PC-3 (cell line): ENCODE measurements at regions of chr3 and their contacts with region 1.

Region 1: GRCh38 chr3:107938143-107938542 is 152.7 kb downstream of the CD47 start:
- DNase-seq: peak; percentile 79
- ATAC-seq: peak; percentile 21
- H3K4me3 ChIP-seq: no peak overlapping the region
- H3K27ac ChIP-seq: no peak overlapping the region
- H3K4me1 ChIP-seq: peaks cover 21% of the 10 kb centered on the region
- H3K27me3 ChIP-seq: no peaks in the 10 kb centered on the region
- CTCF ChIP-seq: peak; percentile 90

Region 2: GRCh38 chr3:107987036-107987947 is 49.1 kb after region 1 on chr3:
- CTCF ChIA-PET with region 1: no interaction called
- POLR2A ChIA-PET with region 1: no interaction called
- intact Hi-C with region 1: loop called (anchors 2 kb)
- DNase-seq: peak; percentile 98
- ATAC-seq: peak; percentile 52
- H3K4me3 ChIP-seq: no peak overlapping the region
- H3K27ac ChIP-seq: peak overlapping the region; percentile 94
- H3K4me1 ChIP-seq: peaks cover 58% of the 10 kb centered on the region
- H3K27me3 ChIP-seq: no peaks in the 10 kb centered on the region
- CTCF ChIP-seq: no peak

Region 3: GRCh38 chr3:108090701-108091451 is 152.7 kb after region 1 on chr3 and contains the start of gene CD47:
- CTCF ChIA-PET with region 1: no interaction called
- POLR2A ChIA-PET with region 1: no interaction called
- intact Hi-C with region 1: loop called (anchors 1 kb)
- DNase-seq: peak; percentile 92
- ATAC-seq: peak; percentile 79
- H3K4me3 ChIP-seq: peak within 1 kb of the TSS; percentile 96
- H3K27ac ChIP-seq: peak within 1 kb of the TSS; percentile 17
- H3K4me1 ChIP-seq: peaks cover 15% of the 10 kb centered on the region; the same call in 1 of the 2 replicates
- H3K27me3 ChIP-seq: no peaks in the 10 kb centered on the region
- CTCF ChIP-seq: no peak
- total RNA-seq, gene CD47: 48.4 and 63.6 TPM in 2 replicates

Region 4: DNA sequence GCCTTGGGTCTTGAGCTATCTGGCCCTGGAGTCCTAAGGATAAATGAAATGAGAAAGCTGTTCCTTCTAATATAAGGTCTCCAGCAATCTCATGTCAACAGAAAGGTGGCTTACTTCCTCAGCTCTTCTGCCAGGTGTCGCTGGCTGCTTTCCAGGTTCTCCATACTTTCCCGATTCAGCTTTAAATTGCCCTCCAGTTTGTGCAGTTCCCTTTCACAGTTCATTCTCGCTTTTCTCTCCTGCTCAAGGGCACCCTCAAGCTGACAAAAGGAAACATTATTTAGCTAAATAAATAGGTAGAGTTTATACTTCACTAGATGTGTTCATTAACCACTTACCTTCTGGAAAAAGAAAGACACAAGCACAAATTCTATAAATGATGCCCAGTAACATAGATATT is 499.3 kb after region 1 on chr3:
- CTCF ChIA-PET with region 1: no interaction called
- POLR2A ChIA-PET with region 1: no interaction called
- intact Hi-C with region 1: loop called (anchors 1 kb)
- DNase-seq: peak; percentile 35
- ATAC-seq: peak; percentile 50
- H3K4me3 ChIP-seq: no peak overlapping the region
- H3K27ac ChIP-seq: no peak overlapping the region
- H3K4me1 ChIP-seq: peaks cover 7% of the 10 kb centered on the region; the same call in 1 of the 2 replicates
- H3K27me3 ChIP-seq: no peaks in the 10 kb centered on the region
- CTCF ChIP-seq: 0 out of 2 replicates have a peak, but pooled peaks have one; percentile 28

Region 5: GRCh38 chr3:108552267-108553159 is 614.4 kb after region 1 on chr3:
- CTCF ChIA-PET with region 1: no interaction called
- POLR2A ChIA-PET with region 1: no interaction called
- intact Hi-C with region 1: loop called (anchors 5 kb)
- DNase-seq: peak; percentile 76
- ATAC-seq: no peak
- H3K4me3 ChIP-seq: no peak overlapping the region
- H3K27ac ChIP-seq: no peak overlapping the region
- H3K4me1 ChIP-seq: peaks cover 38% of the 10 kb centered on the region
- H3K27me3 ChIP-seq: no peaks in the 10 kb centered on the region
- CTCF ChIP-seq: peak; percentile 77